GM12878 (cell line): ENCODE measurements at regions of chr3 and their contacts with region 1.

Region 1: GRCh38 chr3:171347301-171348039 is 112.7 kb downstream of the TNIK start:
- DNase-seq: peak; percentile 95
- ATAC-seq: peak; percentile 84
- H3K4me3 ChIP-seq: peak overlapping the region; percentile 33
- H3K27ac ChIP-seq: peak overlapping the region; percentile 94
- H3K4me1 ChIP-seq: peaks cover 78% of the 10 kb centered on the region
- H3K27me3 ChIP-seq: no peaks in the 10 kb centered on the region
- CTCF ChIP-seq: no peak
- EP300 ChIP-seq: peak in 1 of 2 experiments; percentile 70; a peak in 3 of 4 replicates
- POLR2A ChIP-seq: no peak
- RAD21 ChIP-seq: no peak

Region 2: GRCh38 chr3:171248425-171249111 is 98.9 kb before region 1 on chr3:
- CTCF ChIA-PET with region 1: interaction called, 9 read pairs
- POLR2A ChIA-PET with region 1: no interaction called
- RAD21 ChIA-PET with region 1: interaction called, 23 read pairs
- SMC1A ChIA-PET with region 1: interaction called, 29 read pairs
- in situ Hi-C with region 1: no loop called
- intact Hi-C with region 1: no loop called
- DNase-seq: no peak
- ATAC-seq: peak; percentile 80
- H3K4me3 ChIP-seq: peak overlapping the region; percentile 53
- H3K27ac ChIP-seq: peak overlapping the region; percentile 80
- H3K4me1 ChIP-seq: peaks cover 68% of the 10 kb centered on the region
- H3K27me3 ChIP-seq: no peaks in the 10 kb centered on the region
- CTCF ChIP-seq: no peak
- EP300 ChIP-seq: peak; percentile 80 to 90
- POLR2A ChIP-seq: no peak
- RAD21 ChIP-seq: no peak

Region 3: DNA sequence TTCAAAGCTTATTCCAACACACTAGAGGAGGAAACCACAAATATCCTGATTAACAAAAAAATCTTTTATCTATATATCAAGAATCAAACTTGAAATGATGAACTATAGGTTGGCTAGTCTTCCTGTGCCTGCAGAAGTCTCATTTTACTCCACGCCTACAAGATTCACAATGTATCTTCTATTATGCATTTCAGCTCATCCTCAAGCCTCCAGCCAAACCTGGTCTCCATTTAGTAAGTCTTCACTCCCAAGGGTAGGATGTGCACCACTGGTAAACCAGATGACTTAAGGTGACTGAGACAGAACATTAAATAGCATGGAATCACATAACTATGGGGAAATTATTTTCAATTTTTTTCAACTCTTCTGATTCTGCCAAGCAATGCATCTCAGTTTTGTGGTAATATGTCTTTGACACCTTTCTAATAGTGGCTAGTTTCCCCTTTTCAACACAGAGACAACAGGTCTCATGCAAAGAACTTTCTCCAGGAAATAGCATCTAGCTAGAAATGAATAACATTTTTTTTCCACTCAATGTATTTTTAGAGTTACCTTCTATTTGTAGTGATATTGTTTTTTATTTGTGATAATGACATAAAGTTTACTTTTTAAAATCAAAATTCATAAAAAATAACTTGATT is 54.2 kb before region 1 on chr3:
- CTCF ChIA-PET with region 1: interaction called, 4 read pairs
- POLR2A ChIA-PET with region 1: interaction called, 6 read pairs
- RAD21 ChIA-PET with region 1: interaction called, 17 read pairs
- SMC1A ChIA-PET with region 1: interaction called, 70 read pairs
- in situ Hi-C with region 1: no loop called
- intact Hi-C with region 1: no loop called
- DNase-seq: no peak
- ATAC-seq: peak; percentile 67
- H3K4me3 ChIP-seq: no peak overlapping the region
- H3K27ac ChIP-seq: peak overlapping the region; percentile 60
- H3K4me1 ChIP-seq: peaks cover 60% of the 10 kb centered on the region
- H3K27me3 ChIP-seq: no peaks in the 10 kb centered on the region
- CTCF ChIP-seq: no peak
- EP300 ChIP-seq: 0 out of 4 replicates have a peak, but pooled peaks have one; percentile 7 to 22
- POLR2A ChIP-seq: no peak
- RAD21 ChIP-seq: no peak

Region 4: DNA sequence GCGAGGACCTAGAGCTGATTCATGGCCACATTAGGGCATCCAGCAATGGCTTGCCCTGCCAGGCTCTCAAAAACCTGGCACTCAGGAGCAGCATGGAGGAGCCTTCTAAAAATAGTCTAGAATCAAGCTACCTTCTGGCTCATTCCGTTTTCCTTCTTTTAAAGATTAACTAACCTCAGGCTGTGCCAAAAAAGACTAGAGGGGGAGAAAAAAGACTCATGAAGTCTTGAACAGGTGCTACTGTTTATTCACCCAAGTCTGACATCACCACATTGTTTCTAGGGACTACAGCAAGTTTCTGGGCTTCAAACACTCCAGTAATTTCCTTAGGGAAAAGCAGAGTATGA is 13.0 kb before region 1 on chr3:
- CTCF ChIA-PET with region 1: interaction called, 8 read pairs
- POLR2A ChIA-PET with region 1: interaction called, 9 read pairs
- RAD21 ChIA-PET with region 1: interaction called, 24 read pairs
- SMC1A ChIA-PET with region 1: interaction called, 89 read pairs
- in situ Hi-C with region 1: no loop called
- intact Hi-C with region 1: no loop called
- DNase-seq: no peak
- ATAC-seq: peak; percentile 32
- H3K4me3 ChIP-seq: no peak overlapping the region
- H3K27ac ChIP-seq: peak overlapping the region; percentile 4
- H3K4me1 ChIP-seq: peaks cover 32% of the 10 kb centered on the region
- H3K27me3 ChIP-seq: no peaks in the 10 kb centered on the region
- CTCF ChIP-seq: no peak
- EP300 ChIP-seq: no peak
- POLR2A ChIP-seq: no peak
- RAD21 ChIP-seq: no peak

Region 5: DNA sequence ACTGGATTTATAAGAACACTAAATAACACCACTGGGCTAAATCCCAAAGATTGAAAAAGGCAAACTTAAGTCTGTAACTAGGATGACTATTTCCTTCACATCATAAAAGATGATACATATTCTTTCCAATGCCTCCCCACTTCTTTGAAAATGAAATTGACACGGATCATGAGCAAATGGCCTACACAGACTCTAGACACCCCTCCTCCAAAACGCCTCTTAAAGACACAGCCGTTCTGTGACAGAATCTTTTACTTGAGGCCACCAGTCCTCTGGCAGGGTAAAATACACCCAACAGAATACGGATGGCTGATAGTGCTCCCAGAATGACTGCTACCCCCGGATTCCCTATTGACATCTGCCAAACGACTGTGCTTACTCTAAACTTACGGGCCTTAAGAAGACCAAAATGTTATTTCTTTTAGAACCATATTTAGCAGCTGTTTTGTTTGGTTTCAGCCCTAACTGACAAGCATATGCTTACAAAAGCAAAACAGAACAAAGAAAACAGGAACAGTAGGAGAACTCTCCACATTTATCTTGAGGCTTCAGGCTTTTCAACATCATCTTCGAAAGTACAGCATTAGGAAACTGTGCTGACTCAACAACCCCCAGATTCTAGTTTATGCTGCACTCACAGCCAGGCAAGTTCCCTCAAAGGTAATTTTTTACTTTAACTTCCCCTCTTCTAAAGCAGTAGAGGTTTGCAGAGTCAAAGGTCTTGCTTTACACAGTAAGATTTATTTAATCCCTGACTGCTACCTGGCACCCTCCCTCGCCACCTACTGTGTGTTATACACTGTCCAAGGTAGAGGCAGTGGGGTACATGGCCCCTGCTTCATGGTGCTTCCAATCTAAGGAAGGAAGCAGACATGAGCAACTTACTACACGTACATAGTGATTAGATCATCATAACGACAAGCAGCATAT is 28.5 kb after region 1 on chr3:
- CTCF ChIA-PET with region 1: interaction called, 4 read pairs
- POLR2A ChIA-PET with region 1: interaction called, 9 read pairs
- RAD21 ChIA-PET with region 1: interaction called, 13 read pairs
- SMC1A ChIA-PET with region 1: interaction called, 19 read pairs
- in situ Hi-C with region 1: no loop called
- intact Hi-C with region 1: no loop called
- DNase-seq: no peak
- ATAC-seq: peak; percentile 69
- H3K4me3 ChIP-seq: no peak overlapping the region
- H3K27ac ChIP-seq: peak overlapping the region; percentile 22; the same call in 1 of the 2 replicates
- H3K4me1 ChIP-seq: peaks cover 37% of the 10 kb centered on the region
- H3K27me3 ChIP-seq: no peaks in the 10 kb centered on the region
- CTCF ChIP-seq: no peak
- EP300 ChIP-seq: no peak
- POLR2A ChIP-seq: no peak
- RAD21 ChIP-seq: no peak

Region 6: DNA sequence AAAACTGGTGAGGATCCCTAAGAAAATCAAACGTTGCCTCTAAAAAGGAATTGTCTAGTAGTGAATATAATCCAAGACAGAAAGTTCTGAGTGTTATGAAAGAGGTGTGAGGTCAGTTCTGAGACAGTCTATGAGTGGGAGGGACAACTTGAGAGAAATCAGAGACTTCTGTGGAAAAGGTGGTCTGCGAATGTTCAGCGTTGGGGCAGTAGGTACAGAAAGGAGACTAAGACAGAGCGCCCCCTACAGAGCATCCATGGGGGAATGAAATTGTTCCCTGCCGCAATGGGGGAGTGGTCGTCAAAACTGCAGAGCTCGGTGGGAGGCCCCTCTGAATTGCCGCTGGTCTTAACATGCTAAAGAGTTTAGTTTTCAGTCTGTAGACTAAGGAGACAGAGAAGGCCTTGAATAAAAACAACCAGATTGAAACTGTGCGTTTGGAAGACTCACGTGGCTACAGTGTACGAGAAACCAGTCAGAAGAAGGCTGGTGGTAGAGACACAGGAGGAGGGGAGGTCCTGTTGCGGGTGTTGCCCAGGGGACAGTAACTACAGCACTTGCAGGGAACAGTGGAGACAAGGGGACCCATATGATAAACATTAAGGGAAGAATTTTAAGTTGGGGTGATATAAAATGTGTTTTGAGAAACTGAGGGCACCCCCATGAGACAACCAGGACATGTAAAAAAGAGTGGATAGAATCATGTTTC is 105.9 kb after region 1 on chr3:
- CTCF ChIA-PET with region 1: interaction called, 5 read pairs
- POLR2A ChIA-PET with region 1: interaction called, 3 read pairs
- RAD21 ChIA-PET with region 1: interaction called, 11 read pairs
- SMC1A ChIA-PET with region 1: interaction called, 26 read pairs
- in situ Hi-C with region 1: no loop called
- intact Hi-C with region 1: no loop called
- DNase-seq: no peak
- ATAC-seq: peak; percentile 34
- H3K4me3 ChIP-seq: 0 out of 2 replicates have a peak overlapping the region, but pooled peaks have one; percentile 2
- H3K27ac ChIP-seq: no peak overlapping the region
- H3K4me1 ChIP-seq: peaks cover 17% of the 10 kb centered on the region
- H3K27me3 ChIP-seq: no peaks in the 10 kb centered on the region
- CTCF ChIP-seq: peak; percentile 42 to 63 (median 43); a peak in 5 of 6 replicates
- EP300 ChIP-seq: no peak
- POLR2A ChIP-seq: no peak
- RAD21 ChIP-seq: 0 out of 2 replicates have a peak, but pooled peaks have one; percentile 39

Region 7: DNA sequence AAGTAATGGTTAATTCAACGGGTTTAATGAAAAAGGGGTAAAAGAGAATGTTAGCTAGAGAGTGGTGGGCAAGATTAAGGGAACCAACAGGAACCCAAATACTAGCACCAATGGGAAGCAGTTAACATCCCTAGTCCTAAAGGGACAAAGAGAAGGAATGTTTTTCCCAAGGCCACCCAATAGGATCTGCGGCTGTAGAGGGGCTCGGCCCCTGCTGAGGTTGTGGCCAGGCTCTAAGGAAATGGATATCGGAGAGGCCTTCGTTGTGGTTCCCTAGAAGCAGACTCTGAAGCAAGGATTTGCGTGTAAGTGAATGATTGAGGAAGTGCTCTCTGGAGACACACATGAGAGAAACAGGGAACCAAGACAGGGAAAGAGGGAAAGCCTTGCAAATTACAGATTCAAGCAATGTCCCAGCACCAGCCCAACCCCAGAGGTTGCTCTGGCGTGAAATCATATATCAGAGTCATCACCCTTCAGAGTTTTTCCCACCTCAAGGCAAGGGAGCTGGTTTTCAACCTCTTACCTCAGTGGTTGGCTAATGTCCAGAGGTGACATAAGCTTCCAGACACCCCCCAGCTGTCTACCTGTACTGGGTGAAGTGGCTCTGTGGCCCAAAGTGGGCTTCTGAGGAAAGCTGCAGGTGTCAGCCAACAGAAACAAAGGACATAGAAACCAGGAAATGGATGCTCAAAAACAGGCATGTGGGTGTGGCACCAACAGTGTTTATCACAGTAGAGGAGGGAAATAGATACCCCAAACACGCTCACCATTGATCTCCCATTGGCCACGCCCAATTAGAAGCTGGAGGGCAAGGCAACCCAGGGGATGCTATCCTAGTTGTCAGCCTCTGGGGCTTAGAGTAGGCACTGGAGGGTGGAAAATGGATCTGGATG is 196.5 kb after region 1 on chr3:
- CTCF ChIA-PET with region 1: no interaction called
- POLR2A ChIA-PET with region 1: no interaction called
- RAD21 ChIA-PET with region 1: no interaction called
- SMC1A ChIA-PET with region 1: no interaction called
- in situ Hi-C with region 1: no loop called
- intact Hi-C with region 1: no loop called
- DNase-seq: no peak
- ATAC-seq: no peak
- H3K4me3 ChIP-seq: no peak overlapping the region
- H3K27ac ChIP-seq: no peak overlapping the region
- H3K4me1 ChIP-seq: no peaks in the 10 kb centered on the region
- H3K27me3 ChIP-seq: no peaks in the 10 kb centered on the region
- CTCF ChIP-seq: no peak
- EP300 ChIP-seq: no peak
- POLR2A ChIP-seq: no peak
- RAD21 ChIP-seq: no peak

Region 8: GRCh38 chr3:171809821-171810628 is 462.6 kb after region 1 on chr3 and contains the start of gene PLD1:
- CTCF ChIA-PET with region 1: no interaction called
- POLR2A ChIA-PET with region 1: no interaction called
- RAD21 ChIA-PET with region 1: no interaction called
- SMC1A ChIA-PET with region 1: no interaction called
- in situ Hi-C with region 1: no loop called
- intact Hi-C with region 1: loop called (anchors 10 kb)
- DNase-seq: no peak
- ATAC-seq: peak; percentile 72
- H3K4me3 ChIP-seq: peak within 1 kb of the TSS; percentile 69
- H3K27ac ChIP-seq: peak within 1 kb of the TSS; percentile 45
- H3K4me1 ChIP-seq: no peaks in the 10 kb centered on the region
- H3K27me3 ChIP-seq: no peaks in the 10 kb centered on the region
- CTCF ChIP-seq: 0 out of 6 replicates have a peak, but pooled peaks of 1 of the 3 experiments have one; percentile 5
- EP300 ChIP-seq: peak; percentile 6 to 12; a peak in 2 of 4 replicates
- POLR2A ChIP-seq: no peak
- RAD21 ChIP-seq: no peak
- polyA plus RNA-seq, gene PLD1: 3.1 to 3.4 TPM